ENCODE measurements at regions of chr21 and their contacts with region 1.

Region 1: GRCh38 chr21:16071092-16071491 is 341.3 kb downstream of the USP25 start:
- DNase-seq: peak in 1 of 5 donors; percentile 21
- ATAC-seq: no peak
- H3K4me3 ChIP-seq: peak overlapping the region in 4 of 12 donors; percentile 11 to 24 (median 22)
- H3K27ac ChIP-seq: no peak overlapping the region
- H3K4me1 ChIP-seq: no peaks in the 10 kb centered on the region
- H3K27me3 ChIP-seq: no peaks in the 10 kb centered on the region
- CTCF ChIP-seq: no peak
- POLR2A ChIP-seq: no peak

Region 2: GRCh38 chr21:16007943-16008342 is 63.1 kb before region 1 on chr21:
- intact Hi-C with region 1: no loop called
- DNase-seq: no peak
- ATAC-seq: no peak
- H3K4me3 ChIP-seq: no peak overlapping the region
- H3K27ac ChIP-seq: no peak overlapping the region
- H3K4me1 ChIP-seq: peaks cover 0 to 4% (median 0%) of the 10 kb centered on the region in 12 donors
- H3K27me3 ChIP-seq: no peaks in the 10 kb centered on the region
- CTCF ChIP-seq: no peak
- POLR2A ChIP-seq: no peak

Region 3: GRCh38 chr21:17045214-17045853 is 974.2 kb after region 1 on chr21:
- intact Hi-C with region 1: loop called in 2 of 10 experiments (anchors 10 kb)
- DNase-seq: no peak
- ATAC-seq: peak in 2 of 4 donors; percentile 37 to 53
- H3K4me3 ChIP-seq: no peak overlapping the region
- H3K27ac ChIP-seq: no peak overlapping the region
- H3K4me1 ChIP-seq: no peaks in the 10 kb centered on the region
- H3K27me3 ChIP-seq: no peaks in the 10 kb centered on the region
- CTCF ChIP-seq: peak; percentile 29 to 61 (median 48)
- POLR2A ChIP-seq: no peak

Region 4: GRCh38 chr21:17051054-17051453 is 980.0 kb after region 1 on chr21:
- intact Hi-C with region 1: loop called in 2 of 10 experiments (anchors 10 kb)
- DNase-seq: no peak
- ATAC-seq: peak in 1 of 4 donors; percentile 47
- H3K4me3 ChIP-seq: no peak overlapping the region
- H3K27ac ChIP-seq: no peak overlapping the region
- H3K4me1 ChIP-seq: peaks cover 0 to 3% (median 0%) of the 10 kb centered on the region in 12 donors
- H3K27me3 ChIP-seq: no peaks in the 10 kb centered on the region
- CTCF ChIP-seq: no peak
- POLR2A ChIP-seq: no peak

Measured in heart left ventricle (tissue), 16 donors.